Left ventricle myocardium superior (tissue), 1 donor: ENCODE measurements at regions of chr5 and their contacts with region 1.

Region 1: GRCh38 chr5:36414869-36415282 is 113.2 kb upstream of the RANBP3L start:
- DNase-seq: no peak
- ATAC-seq: peak; percentile 59

Region 2: DNA sequence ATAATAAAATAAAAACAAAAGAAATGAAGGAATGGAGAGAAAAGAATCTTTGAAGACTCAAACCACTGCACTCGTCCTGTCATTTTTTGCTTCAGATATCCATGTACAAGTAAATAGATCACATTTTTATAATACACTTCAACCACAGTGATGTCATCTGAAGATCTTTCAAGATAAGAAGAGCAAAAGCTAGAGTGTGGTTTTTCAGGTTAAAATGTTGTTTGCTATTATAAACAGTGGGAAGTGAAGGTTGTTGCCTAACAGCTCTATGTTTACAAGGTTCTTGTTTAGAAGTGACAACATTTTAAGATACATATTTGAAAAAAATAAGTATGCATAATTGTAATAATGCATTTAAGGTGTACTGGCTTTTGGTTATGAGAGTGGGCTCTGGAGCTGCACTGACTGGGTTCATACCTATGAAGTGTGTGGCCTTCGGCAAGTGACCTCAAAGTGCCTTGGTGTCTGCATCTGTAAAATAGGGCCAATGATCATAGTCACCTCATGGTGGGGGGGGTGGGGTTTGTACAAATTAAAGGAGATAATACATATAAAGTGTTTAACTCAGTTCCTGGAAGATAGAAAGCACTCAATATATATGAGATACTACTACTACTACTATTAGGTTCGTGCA is 603.7 kb before region 1 on chr5:
- intact Hi-C with region 1: no loop called
- DNase-seq: no peak
- ATAC-seq: no peak

Region 3: DNA sequence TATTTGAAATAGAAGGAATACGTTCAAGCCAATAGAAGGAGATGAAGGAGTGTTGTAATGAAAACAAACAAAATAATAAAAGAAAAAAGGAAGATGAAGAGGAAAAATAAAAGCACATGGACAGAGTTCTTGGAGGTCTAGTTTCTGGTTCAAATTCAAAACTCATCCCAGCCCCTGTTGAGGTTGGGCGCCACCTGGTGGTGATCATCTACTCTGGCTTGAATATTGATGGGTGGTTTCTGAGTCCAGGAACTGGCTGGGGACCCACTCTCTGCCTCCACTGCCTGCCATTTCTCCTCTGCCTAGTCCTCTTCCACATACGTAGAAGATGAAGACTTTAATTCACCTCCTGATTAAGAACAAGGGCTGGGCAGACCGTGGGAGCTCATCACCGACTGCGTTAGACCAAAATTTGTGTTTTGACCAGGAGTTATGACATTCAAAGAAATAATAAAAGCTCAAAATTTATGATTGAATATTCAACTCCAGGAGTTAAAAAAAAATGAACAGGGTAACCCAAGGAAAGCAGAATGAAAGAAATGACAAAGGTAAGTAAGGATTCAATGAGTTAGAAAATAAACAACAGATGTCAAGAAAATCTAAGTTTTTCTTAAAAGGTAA is 92.6 kb after region 1 on chr5:
- intact Hi-C with region 1: loop called (anchors 10 kb)
- DNase-seq: peak; percentile 85
- ATAC-seq: peak; percentile 76

Region 4: GRCh38 chr5:36606428-36607113 is 191.7 kb after region 1 on chr5 and contains the start of gene SLC1A3:
- intact Hi-C with region 1: loop called (anchors 5 kb)
- DNase-seq: peak; percentile 68
- ATAC-seq: peak; percentile 88
- total RNA-seq, gene SLC1A3: 105 TPM

Region 5: DNA sequence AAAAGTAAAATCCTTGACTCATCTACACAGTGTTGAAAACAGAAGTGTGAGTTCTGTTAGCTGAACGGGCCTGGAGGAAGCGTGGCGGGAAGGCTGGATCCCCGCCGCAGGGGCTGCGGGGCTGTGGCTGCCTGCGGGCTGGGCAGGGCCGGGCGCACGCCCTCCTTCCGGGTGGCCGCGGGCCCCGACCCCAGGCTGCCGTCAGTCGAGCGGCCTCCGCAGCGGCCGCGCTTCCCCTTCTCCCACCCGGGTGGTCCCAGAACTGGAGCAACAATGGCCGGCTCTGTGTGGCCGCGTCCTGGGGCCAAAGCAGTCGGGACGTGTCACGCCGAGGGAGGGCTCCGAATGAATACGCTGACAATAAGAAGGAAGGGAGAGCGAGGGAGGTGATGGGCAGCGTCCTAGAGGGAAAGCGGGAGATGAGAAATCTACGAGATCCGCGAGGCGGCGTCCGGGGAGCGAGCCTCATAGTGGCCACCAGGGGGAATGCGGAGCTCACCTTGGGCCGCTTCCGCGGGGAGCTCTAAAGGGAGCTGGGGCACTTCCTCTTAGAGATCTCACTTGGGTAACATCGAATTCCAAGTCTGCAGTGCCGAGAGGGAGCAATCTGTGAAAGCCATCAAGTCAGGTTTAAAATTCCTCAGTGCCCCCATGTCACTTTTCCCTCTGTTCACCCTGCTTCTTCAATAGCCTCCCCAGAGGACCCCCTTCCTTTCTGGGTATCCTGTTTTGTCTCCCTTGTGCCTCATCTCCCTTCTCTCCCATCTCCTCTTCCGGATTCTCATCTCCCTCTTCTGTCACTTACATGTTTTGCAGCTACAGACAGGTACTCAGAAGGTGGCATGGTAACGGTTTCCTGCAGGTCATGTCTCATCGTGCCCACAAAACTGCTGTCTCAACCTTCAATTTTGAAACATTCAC is 275.4 kb after region 1 on chr5:
- intact Hi-C with region 1: loop called (anchors 2 kb)
- DNase-seq: peak; percentile 88
- ATAC-seq: peak; percentile 72